Posterior cingulate gyrus (tissue), 11 donors: ENCODE measurements at regions of chr17 and their contacts with region 1.

Region 1: DNA sequence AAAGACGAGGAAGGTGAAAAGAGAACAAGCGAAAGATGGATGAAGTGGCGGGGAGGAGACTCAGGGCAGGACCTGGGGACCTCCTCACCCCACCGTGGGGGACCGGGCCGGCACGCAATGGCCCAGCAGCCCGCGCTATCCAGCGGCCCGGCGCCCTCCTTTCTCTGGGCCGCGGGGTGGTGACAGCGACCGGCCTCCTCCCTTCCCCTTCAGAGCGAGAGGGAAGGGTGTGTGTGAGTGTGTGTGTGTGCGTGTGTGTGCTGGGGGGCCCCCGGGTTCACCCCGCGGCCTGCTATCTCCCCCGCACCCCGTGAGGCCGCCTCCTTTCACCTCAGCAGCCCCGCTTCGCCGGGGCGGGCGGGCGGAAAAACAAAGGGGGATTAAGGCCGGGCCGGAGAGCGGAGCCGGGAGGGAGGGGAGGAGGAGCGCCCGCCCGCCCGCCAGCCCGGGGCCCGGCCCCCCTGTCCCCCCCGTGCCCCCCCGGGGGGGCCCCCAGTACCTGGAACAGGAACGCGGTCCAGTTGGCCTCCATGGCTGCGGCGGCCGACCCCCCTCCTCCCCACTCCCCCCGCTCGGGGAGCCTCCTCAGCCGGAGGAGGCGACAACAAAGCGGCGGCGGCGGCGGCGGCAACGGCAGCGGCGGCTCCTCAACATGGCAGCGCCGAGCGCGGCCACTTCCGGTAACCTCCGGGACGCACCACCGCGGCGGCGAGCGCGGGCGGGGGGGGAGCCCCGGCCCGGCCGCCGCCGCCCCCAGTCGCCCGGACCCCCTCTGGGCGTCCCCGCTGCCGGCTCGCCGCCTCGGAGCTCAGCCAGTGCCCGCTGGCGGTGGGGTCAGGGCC is at the start of gene VEZF1:
- DNase-seq: peak; percentile 59 to 95 (median 66)

Region 2: DNA sequence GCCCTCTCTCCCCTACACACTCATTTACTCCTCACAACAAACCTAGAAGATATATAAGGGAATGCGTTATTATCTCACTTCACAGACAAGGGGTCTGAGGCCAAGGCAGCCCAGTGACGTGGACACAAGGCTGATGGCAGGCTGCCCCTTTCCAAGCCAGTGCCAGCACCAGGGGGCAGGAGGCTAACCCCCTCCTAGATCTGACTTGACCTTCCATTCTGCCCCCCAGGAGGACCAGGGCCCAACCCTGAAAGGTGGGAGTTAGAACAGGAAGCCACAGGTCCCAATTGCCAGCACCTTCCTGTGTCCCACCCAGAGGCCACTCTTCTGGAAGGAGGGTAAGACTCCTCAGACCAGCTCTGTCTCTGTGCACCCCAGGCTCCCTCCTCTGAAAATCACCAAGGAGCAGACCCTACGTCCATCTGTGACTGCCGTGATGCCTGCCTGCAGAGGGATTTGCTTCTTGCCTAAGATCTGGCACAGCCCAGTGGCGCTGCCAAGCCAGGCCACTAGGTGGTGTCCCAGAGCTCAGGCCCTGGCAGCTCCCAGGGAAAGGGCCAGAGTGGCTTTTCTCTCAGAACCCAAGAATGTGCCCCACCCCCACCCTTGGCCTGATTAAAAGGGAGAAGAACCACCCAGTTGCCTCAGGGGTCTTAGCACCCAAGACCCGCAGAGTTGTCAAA is 95.5 kb before region 1 on chr17:
- intact Hi-C with region 1: loop called (anchors 5 kb)
- DNase-seq: peak in 9 of 10 donors; percentile 73 to 98 (median 80)

Region 3: GRCh38 chr17:57954395-57955182 is 33.2 kb before region 1 on chr17:
- intact Hi-C with region 1: loop called (anchors 5 kb)
- DNase-seq: peak; percentile 56 to 94 (median 62)